ENCODE measurements at regions of chr1 and their contacts with region 1.

Region 1: DNA sequence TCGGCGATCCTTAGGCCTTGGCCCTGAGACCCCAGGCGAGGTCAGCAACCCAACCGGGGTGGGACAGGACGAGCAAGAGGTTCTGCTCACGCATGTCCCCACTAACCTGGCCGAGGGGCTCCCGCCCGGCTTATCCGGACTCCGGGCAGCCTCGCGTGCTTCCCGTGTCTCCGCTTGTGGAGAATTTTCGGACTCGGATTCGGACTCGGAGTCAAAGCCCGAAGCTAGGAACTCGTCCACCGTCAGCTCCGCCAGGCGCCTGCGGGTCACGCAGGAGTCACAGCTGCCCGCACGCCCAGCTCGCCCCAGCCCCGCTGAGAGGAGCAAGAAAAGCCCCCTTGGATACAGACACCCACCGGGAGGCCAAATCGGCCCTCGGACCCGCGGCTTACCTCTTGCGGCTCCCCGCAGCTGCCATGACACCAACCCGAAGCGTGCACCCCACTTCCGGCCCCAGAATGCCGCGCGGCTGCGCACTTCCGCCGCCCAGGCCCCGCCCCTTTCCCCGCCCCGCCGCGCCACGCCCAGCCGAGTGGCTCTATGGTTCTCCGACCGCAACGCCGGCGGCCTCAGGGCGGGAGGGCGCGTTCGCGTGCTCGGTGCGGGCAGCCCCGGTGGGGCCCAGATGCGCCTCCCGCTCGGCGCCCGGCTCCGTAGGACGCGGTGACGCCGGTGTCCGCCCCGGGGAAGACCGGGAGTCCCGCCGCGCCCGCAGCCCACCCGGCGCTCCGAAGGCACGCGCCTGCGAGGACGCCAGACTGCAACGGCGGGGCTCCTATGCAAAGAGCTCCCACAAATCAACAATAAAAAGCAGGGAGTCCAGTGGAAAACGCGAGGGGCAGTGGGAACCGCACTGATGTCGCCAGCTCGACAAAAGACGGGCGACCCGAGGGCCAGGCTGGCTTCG is at the start of gene NOC2L:
- DNase-seq: peak; percentile 98
- ATAC-seq: peak; percentile 86
- H3K4me3 Mint-ChIP-seq: peak within 1 kb of the TSS; percentile 82
- H3K27ac Mint-ChIP-seq: peak within 1 kb of the TSS; percentile 63
- H3K4me1 Mint-ChIP-seq: peaks cover 18% of the 10 kb centered on the region
- H3K27me3 Mint-ChIP-seq: no peaks in the 10 kb centered on the region
- total RNA-seq, gene NOC2L: 112 to 134 TPM

Region 2: GRCh38 chr1:999725-1000356 is 40.8 kb after region 1 on chr1 and contains the start of gene HES4:
- CTCF ChIA-PET with region 1: no interaction called
- POLR2A ChIA-PET with region 1: no interaction called
- intact Hi-C with region 1: loop called in 1 of 2 experiments (anchors 1 kb)
- DNase-seq: peak; percentile 85
- ATAC-seq: peak; percentile 67
- H3K4me3 Mint-ChIP-seq: peak within 1 kb of the TSS; percentile 72
- H3K27ac Mint-ChIP-seq: peak within 1 kb of the TSS; percentile 90
- H3K4me1 Mint-ChIP-seq: peaks cover 14% of the 10 kb centered on the region
- H3K27me3 Mint-ChIP-seq: peaks cover 22% of the 10 kb centered on the region
- total RNA-seq, gene HES4: 3.5 to 4.2 TPM

Region 3: DNA sequence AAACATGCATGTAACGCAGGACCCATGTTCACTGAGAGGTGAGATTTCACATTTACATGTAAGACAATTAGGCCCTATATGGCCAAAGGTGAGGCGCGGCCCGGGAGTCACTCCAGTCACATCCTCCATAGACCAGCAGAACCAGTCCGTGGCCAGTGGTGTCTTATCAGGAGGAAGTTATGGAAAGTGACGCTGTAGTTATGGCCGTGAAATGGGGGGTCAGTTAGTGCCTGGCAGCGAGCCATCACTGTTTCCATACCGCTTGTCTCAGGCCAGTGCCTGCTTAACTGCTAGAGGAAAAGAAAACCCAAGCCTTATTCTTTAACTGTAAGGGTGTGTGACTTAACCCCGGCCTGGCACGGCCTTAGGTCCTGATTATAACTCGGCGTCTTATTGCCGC is 150.7 kb after region 1 on chr1:
- CTCF ChIA-PET with region 1: no interaction called
- POLR2A ChIA-PET with region 1: no interaction called
- intact Hi-C with region 1: no loop called
- DNase-seq: no peak
- ATAC-seq: no peak
- H3K4me3 Mint-ChIP-seq: no peak overlapping the region
- H3K27ac Mint-ChIP-seq: no peak overlapping the region
- H3K4me1 Mint-ChIP-seq: peaks cover 13% of the 10 kb centered on the region
- H3K27me3 Mint-ChIP-seq: no peaks in the 10 kb centered on the region

Region 4: DNA sequence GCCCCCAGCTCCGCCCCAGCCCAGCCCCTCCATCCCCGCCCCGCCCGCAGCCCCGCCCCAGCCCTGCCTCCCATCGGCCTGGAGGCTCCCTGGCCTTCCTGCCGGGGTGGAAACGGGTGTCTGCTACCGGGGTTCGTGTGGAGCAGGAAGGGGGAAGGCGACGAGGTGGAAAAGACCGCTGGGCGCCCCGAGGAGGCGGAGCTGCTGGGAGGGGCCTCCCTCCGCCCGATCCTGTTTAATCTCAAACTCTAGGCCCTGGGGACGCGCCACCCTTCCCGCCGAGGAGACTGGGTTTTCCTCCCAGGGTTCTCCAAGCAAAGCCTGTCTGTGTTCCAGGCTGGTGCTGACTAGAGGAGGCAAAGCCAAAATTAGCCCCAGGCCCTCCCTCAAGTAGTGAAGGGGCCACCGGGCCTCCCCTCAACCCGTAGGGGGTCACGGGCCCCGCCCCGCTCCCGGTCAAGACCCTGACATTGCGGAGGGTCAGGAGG is 198.4 kb after region 1 on chr1:
- CTCF ChIA-PET with region 1: no interaction called
- POLR2A ChIA-PET with region 1: no interaction called
- intact Hi-C with region 1: no loop called
- DNase-seq: peak; percentile 81
- ATAC-seq: peak; percentile 86
- H3K4me3 Mint-ChIP-seq: peak overlapping the region; percentile 69
- H3K27ac Mint-ChIP-seq: peak overlapping the region; percentile 47
- H3K4me1 Mint-ChIP-seq: no peaks in the 10 kb centered on the region
- H3K27me3 Mint-ChIP-seq: no peaks in the 10 kb centered on the region

Measured in activated CD4-positive, alpha-beta T cell treated with anti-CD3 and anti-CD28 coated beads for 36 hours (primary cell).